ENCODE measurements at regions of chr5 and their contacts with region 1.

Region 1: GRCh38 chr5:179166886-179167841 is 107.0 kb downstream of the ZNF354C start:
- DNase-seq: peak; percentile 68
- ATAC-seq: peak; percentile 83 to 87

Region 2: GRCh38 chr5:179079165-179079987 is 87.8 kb before region 1 on chr5:
- intact Hi-C with region 1: no loop called
- DNase-seq: no peak
- ATAC-seq: no peak

Region 3: GRCh38 chr5:179495906-179496455 is 328.8 kb after region 1 on chr5:
- intact Hi-C with region 1: loop called (anchors 1 to 2 kb)
- DNase-seq: no peak
- ATAC-seq: no peak

Measured in left cardiac atrium (tissue), 4 donors.